ENCODE measurements at regions of chr11 and their contacts with region 1.

Region 1: GRCh38 chr11:2305140-2305840 is 3.5 kb downstream of the TSPAN32 start:
- DNase-seq: peak; percentile 58
- ATAC-seq: peak; percentile 82
- H3K4me3 ChIP-seq: no peak overlapping the region
- H3K27ac ChIP-seq: peak overlapping the region; percentile 98
- H3K4me1 ChIP-seq: peaks cover 11% of the 10 kb centered on the region
- H3K27me3 ChIP-seq: no peaks in the 10 kb centered on the region
- CTCF ChIP-seq: peak; percentile 88
- POLR2A ChIP-seq: no peak
- RAD21 ChIP-seq: peak; percentile 94

Region 2: GRCh38 chr11:2196970-2197770 is 108.1 kb before region 1 on chr11:
- CTCF ChIA-PET with region 1: no interaction called
- POLR2A ChIA-PET with region 1: no interaction called
- dilution Hi-C with region 1: no loop called
- in situ Hi-C with region 1: no loop called
- intact Hi-C with region 1: loop called (anchors 1 kb)
- DNase-seq: peak; percentile 38
- ATAC-seq: peak; percentile 93
- H3K4me3 ChIP-seq: no peak overlapping the region
- H3K27ac ChIP-seq: no peak overlapping the region
- H3K4me1 ChIP-seq: no peaks in the 10 kb centered on the region
- H3K27me3 ChIP-seq: peaks cover 17% of the 10 kb centered on the region; the same call in 1 of the 2 replicates
- CTCF ChIP-seq: peak; percentile 81
- POLR2A ChIP-seq: no peak
- RAD21 ChIP-seq: peak; percentile 86

Region 3: DNA sequence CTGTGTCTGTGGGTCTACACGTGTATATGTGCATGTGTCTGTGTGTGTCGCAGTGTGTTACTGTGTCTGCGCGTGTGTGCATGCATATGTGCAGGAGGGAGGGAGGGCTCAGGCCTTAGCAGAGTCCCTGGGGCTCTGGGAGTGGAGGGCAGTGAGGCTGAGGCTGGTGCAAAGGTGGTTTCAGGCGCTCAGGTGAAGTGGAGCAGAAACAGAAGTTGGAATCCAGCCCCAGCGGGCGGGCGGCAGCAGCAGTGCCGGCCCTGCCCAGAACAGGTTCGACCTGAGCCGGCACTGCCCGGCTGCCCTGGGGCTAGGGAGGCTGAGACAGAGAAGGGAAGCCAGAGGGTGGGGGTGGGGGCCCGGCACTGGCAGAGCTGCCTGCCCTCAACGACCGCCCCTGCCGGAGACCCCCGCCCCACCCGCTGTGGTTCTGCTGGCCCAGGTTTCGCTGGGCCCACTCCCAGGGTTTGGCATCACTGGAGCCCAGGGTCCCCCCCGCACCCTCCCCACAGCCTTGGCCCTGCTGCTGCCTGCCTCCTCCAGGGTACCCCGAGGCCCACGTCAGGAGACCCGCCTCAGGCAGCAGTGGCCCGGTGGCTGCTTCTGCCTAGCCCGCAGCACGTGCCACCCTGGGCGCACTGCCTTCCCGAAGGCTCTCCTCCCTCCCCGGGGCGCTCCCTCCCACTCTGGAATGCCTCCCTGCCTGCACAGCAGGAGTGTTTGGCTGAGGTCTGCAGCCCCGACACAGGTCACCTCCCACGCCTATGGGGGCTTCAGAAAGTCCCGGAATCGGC is 48.2 kb before region 1 on chr11:
- CTCF ChIA-PET with region 1: no interaction called
- POLR2A ChIA-PET with region 1: no interaction called
- dilution Hi-C with region 1: no loop called
- in situ Hi-C with region 1: no loop called
- intact Hi-C with region 1: no loop called
- DNase-seq: no peak
- ATAC-seq: no peak
- H3K4me3 ChIP-seq: no peak overlapping the region
- H3K27ac ChIP-seq: no peak overlapping the region
- H3K4me1 ChIP-seq: no peaks in the 10 kb centered on the region
- H3K27me3 ChIP-seq: peaks cover 37% of the 10 kb centered on the region
- CTCF ChIP-seq: no peak
- POLR2A ChIP-seq: no peak
- RAD21 ChIP-seq: no peak

Region 4: GRCh38 chr11:2377511-2378443 is 72.5 kb after region 1 on chr11:
- CTCF ChIA-PET with region 1: no interaction called
- POLR2A ChIA-PET with region 1: no interaction called
- dilution Hi-C with region 1: no loop called
- in situ Hi-C with region 1: no loop called
- intact Hi-C with region 1: loop called (anchors 2 kb)
- DNase-seq: peak; percentile 33
- ATAC-seq: peak; percentile 63
- H3K4me3 ChIP-seq: peak overlapping the region; percentile 100
- H3K27ac ChIP-seq: peak overlapping the region; percentile 91
- H3K4me1 ChIP-seq: peaks cover 26% of the 10 kb centered on the region
- H3K27me3 ChIP-seq: no peaks in the 10 kb centered on the region
- CTCF ChIP-seq: no peak
- POLR2A ChIP-seq: 0 out of 2 replicates have a peak, but pooled peaks have one; percentile 12
- RAD21 ChIP-seq: no peak

Region 5: GRCh38 chr11:2400069-2400760 is 94.9 kb after region 1 on chr11 and contains the start of gene TSSC4:
- CTCF ChIA-PET with region 1: no interaction called
- POLR2A ChIA-PET with region 1: no interaction called
- dilution Hi-C with region 1: no loop called
- in situ Hi-C with region 1: no loop called
- intact Hi-C with region 1: loop called (anchors 1 kb)
- DNase-seq: peak; percentile 100
- ATAC-seq: peak; percentile 88
- H3K4me3 ChIP-seq: peak within 1 kb of the TSS; percentile 90
- H3K27ac ChIP-seq: peak within 1 kb of the TSS; percentile 69
- H3K4me1 ChIP-seq: peaks cover 9% of the 10 kb centered on the region
- H3K27me3 ChIP-seq: no peaks in the 10 kb centered on the region
- CTCF ChIP-seq: peak; percentile 100
- POLR2A ChIP-seq: peak; percentile 53
- RAD21 ChIP-seq: peak; percentile 65
- total RNA-seq, gene TSSC4: 40.0 and 45.3 TPM in 2 replicates